Activated naive CD4-positive, alpha-beta T cell treated with anti-CD3 and anti-CD28 coated beads, Interleukin-2, amount 10 ng/mL, durations not matched to agents 7 days and 5 days (primary cell): ENCODE measurements at regions of chr11 and their contacts with region 1.

Region 1: DNA sequence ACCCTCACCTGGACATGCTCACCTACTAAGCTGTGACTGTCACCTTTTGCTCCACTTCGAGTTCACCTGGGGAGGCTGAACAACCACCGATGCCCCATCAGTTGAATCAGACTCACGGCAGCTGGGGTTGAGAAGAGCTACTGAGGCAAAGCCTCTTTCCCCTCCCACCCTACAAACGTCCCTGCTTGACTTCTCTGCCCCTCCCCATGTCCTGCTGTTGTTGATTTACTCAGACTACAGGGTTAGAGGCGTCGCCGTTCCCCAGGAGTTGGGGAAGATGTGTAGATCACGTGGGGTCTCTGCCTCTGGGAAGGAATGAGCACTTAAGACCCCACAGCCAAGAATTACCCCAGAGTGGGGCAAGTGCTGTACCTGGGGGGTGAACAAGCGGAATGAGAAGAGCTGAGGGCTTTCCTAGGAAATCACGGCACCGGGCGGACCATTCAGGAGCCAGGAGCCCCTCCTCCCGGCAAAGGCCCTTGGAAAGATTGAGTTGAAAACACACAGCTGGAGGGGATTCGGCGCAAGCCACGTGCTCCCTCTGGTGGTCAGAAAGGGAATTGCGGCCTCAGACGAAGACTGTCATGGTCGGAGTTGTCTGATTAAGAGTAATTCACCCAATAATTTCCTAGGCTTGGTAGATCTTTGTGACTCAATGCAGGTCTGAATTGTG is 7.0 kb downstream of the FXYD2 start:
- DNase-seq: peak; percentile 88
- H3K4me3 Mint-ChIP-seq: no peak overlapping the region
- H3K27ac Mint-ChIP-seq: peak overlapping the region; percentile 80
- H3K4me1 Mint-ChIP-seq: peaks cover 54% of the 10 kb centered on the region
- H3K27me3 Mint-ChIP-seq: peaks cover 4% of the 10 kb centered on the region

Region 2: DNA sequence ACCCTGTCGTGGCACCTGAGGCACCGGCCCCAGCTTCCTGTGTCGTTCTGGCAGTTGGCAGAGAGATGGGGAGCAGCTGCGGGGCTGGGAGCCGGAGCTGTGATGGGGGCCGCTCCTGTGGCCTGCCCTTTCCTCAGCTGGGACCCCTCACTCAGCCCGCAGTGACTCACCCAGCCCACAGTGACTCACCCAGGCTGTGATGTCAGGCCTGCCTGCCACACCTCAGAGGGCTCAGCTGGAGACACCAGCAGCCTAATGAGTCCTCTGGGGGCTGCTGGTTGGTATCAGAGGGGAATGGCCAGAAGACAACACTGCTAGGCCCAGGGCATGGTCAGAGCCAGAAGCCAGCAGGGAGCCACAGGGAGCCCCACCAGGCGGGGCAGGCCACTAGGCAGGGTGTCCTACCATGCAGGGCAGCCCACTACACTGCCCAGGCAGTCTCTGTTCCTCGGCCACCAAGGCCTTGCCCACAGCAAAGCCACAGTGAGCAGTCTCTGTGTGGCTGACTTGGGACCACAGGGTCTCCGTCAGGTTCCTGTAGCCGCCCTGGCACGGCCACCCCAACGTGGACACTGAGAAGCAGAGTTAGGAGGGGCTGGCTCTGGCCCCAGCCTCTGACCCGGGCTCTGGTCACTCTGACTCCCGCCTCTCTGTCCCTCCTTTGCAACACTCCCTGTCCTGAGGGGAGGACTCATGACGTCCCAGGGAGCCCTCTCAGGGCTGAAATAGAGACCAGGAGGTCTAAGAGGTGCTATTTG is 11.3 kb after region 1 on chr11:
- CTCF ChIA-PET with region 1: interaction called, 20 read pairs
- DNase-seq: peak; percentile 76
- H3K4me3 Mint-ChIP-seq: no peak overlapping the region
- H3K27ac Mint-ChIP-seq: peak overlapping the region; percentile 3
- H3K4me1 Mint-ChIP-seq: peaks cover 58% of the 10 kb centered on the region
- H3K27me3 Mint-ChIP-seq: peaks cover 44% of the 10 kb centered on the region